ENCODE measurements at regions of chr2 and their contacts with region 1.

Region 1: DNA sequence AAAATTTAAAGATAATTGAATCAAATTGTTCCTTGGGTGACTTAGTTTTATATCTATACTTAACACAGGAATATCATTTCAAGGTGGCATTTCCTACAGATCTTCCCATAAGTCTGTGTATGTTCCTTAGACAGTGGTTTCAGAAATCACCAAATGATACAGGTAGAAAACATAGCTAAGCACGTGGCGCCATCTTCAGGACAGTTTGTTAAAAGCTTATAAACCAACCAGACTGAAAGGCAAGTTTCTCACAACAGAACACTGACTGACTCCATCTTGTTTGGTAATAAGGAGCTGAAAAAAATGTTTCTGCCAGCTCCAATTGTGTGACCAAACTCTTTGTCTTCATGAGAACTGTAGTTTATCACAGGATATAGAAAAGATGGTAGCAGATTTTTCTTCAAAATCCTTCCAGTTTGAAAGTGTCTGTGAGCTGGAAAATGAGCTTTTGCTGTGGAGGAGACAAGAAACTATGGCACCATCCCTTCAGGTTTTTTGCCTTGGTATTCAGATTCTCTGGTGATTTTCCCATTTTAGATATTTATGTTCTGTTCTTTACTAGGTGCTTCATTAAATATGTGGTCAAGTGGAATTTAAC is 34.8 kb upstream of the NEUROD1 start:
- DNase-seq: peak; percentile 84
- ATAC-seq: peak; percentile 71
- H3K4me3 Mint-ChIP-seq: no peak overlapping the region
- H3K27ac Mint-ChIP-seq: no peak overlapping the region
- H3K4me1 Mint-ChIP-seq: no peaks in the 10 kb centered on the region
- H3K27me3 Mint-ChIP-seq: no peaks in the 10 kb centered on the region

Region 2: GRCh38 chr2:180125245-180125962 is 1589.7 kb before region 1 on chr2:
- CTCF ChIA-PET with region 1: interaction called, 8 read pairs
- POLR2A ChIA-PET with region 1: no interaction called
- intact Hi-C with region 1: loop called (anchors 2 kb)
- DNase-seq: peak; percentile 60
- ATAC-seq: peak; percentile 88
- H3K4me3 Mint-ChIP-seq: no peak overlapping the region
- H3K27ac Mint-ChIP-seq: no peak overlapping the region
- H3K4me1 Mint-ChIP-seq: peaks cover 1% of the 10 kb centered on the region
- H3K27me3 Mint-ChIP-seq: peaks cover 7% of the 10 kb centered on the region

Region 3: GRCh38 chr2:181077128-181077709 is 637.9 kb before region 1 on chr2:
- CTCF ChIA-PET with region 1: interaction called, 7 read pairs
- POLR2A ChIA-PET with region 1: interaction called, 4 read pairs
- intact Hi-C with region 1: loop called (anchors 1 kb)
- DNase-seq: no peak
- ATAC-seq: peak; percentile 90
- H3K4me3 Mint-ChIP-seq: no peak overlapping the region
- H3K27ac Mint-ChIP-seq: no peak overlapping the region
- H3K4me1 Mint-ChIP-seq: peaks cover 5% of the 10 kb centered on the region
- H3K27me3 Mint-ChIP-seq: no peaks in the 10 kb centered on the region

Region 4: DNA sequence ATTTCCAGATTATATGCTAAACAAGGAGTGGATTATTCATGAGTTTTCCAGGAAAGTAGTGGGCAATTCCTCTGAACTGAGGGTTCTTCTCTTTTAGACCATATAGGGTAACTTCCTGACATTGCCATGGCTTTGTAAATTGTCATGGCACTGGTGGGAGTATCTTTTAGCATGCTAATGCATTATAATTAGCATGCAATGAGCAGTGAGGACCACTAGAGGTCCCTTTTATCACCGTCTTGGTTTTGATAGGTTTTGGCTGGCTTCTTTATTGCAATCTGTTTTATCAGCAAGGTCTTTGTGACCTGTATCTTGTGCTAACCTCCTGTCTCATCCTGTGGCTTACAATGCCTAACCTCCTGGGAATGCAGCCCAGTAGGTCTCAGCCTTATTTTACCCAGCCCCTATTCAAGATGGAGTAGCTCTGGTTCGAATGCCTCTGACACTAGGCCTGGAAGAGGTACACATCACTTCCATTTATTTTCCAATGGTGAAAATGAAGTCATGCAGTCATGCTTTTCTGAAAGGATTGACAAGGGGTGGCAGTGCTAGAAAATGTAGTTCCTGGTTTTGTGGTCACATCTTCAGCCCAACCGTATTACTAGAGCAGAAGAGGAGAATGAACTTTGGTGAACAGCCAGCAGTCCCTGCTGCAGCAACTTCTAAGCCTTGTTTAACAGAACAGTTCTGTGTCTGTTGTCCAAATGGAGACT is 284.6 kb before region 1 on chr2:
- CTCF ChIA-PET with region 1: interaction called, 3 read pairs
- POLR2A ChIA-PET with region 1: no interaction called
- intact Hi-C with region 1: loop called in 1 of 2 experiments (anchors 10 kb)
- DNase-seq: peak; percentile 9
- ATAC-seq: peak; percentile 75
- H3K4me3 Mint-ChIP-seq: no peak overlapping the region
- H3K27ac Mint-ChIP-seq: peak overlapping the region; percentile 63
- H3K4me1 Mint-ChIP-seq: peaks cover 24% of the 10 kb centered on the region
- H3K27me3 Mint-ChIP-seq: no peaks in the 10 kb centered on the region

Region 5: GRCh38 chr2:181466661-181467576 is 248.2 kb before region 1 on chr2:
- CTCF ChIA-PET with region 1: interaction called, 5 read pairs
- POLR2A ChIA-PET with region 1: no interaction called
- intact Hi-C with region 1: loop called (anchors 2 to 10 kb)
- DNase-seq: peak; percentile 90
- ATAC-seq: peak; percentile 22
- H3K4me3 Mint-ChIP-seq: no peak overlapping the region
- H3K27ac Mint-ChIP-seq: peak overlapping the region; percentile 17
- H3K4me1 Mint-ChIP-seq: peaks cover 86% of the 10 kb centered on the region
- H3K27me3 Mint-ChIP-seq: no peaks in the 10 kb centered on the region

Region 6: GRCh38 chr2:181677912-181678586 is 37.1 kb before region 1 on chr2:
- CTCF ChIA-PET with region 1: no interaction called
- POLR2A ChIA-PET with region 1: no interaction called
- intact Hi-C with region 1: no loop called
- DNase-seq: peak; percentile 84
- ATAC-seq: peak; percentile 78
- H3K4me3 Mint-ChIP-seq: peak overlapping the region; percentile 29
- H3K27ac Mint-ChIP-seq: no peak overlapping the region
- H3K4me1 Mint-ChIP-seq: peaks cover 33% of the 10 kb centered on the region
- H3K27me3 Mint-ChIP-seq: peaks cover 65% of the 10 kb centered on the region

Region 7: DNA sequence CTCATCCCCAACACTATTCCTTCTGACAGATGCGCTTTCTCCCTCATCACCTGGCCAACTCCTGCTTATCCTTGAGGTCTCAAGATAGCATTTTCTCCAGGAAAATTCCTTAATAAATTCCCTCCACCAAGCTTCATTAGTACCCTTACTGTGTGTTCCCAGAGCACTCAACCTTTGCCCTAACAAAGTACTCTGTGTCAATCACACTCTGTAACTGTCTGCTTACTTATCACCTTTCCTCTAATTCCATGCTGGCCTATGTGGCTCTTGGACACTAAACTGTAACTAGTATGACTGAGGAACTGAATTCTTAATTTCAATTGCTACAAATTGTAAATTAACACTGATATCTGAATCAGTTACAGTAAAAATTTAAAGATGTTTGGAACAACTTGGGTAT is 16.9 kb before region 1 on chr2:
- CTCF ChIA-PET with region 1: interaction called, 25 read pairs
- POLR2A ChIA-PET with region 1: no interaction called
- intact Hi-C with region 1: no loop called
- DNase-seq: no peak
- ATAC-seq: no peak
- H3K4me3 Mint-ChIP-seq: no peak overlapping the region
- H3K27ac Mint-ChIP-seq: no peak overlapping the region
- H3K4me1 Mint-ChIP-seq: no peaks in the 10 kb centered on the region
- H3K27me3 Mint-ChIP-seq: peaks cover 16% of the 10 kb centered on the region

Region 8: DNA sequence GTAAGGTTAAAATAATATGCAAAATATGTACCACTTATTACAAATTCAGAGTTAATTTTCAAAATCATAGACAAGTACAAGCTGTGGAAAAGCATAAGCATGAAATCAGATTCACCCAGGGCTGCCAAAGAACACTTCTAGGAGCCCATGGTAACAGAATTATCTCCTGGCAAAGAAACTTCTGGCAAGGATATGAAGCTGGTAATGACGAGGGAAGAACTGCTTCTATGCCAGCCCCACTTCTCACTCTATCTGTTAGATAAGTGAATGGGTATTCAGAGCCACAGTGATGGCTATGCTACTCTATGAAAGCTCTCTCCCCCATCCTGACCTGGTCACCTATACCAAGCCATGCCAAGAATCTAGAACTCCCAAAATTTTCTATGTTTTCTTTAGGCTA is 748.6 kb after region 1 on chr2:
- CTCF ChIA-PET with region 1: no interaction called
- POLR2A ChIA-PET with region 1: no interaction called
- intact Hi-C with region 1: no loop called
- DNase-seq: no peak
- ATAC-seq: no peak
- H3K4me3 Mint-ChIP-seq: no peak overlapping the region
- H3K27ac Mint-ChIP-seq: no peak overlapping the region
- H3K4me1 Mint-ChIP-seq: no peaks in the 10 kb centered on the region
- H3K27me3 Mint-ChIP-seq: no peaks in the 10 kb centered on the region

Measured in activated CD4-positive, alpha-beta T cell treated with anti-CD3 and anti-CD28 coated beads for 36 hours (primary cell).